Activated CD4-positive, alpha-beta T cell treated with anti-CD3 and anti-CD28 coated beads for 36 hours (primary cell): ENCODE measurements at regions of chr1 and their contacts with region 1.

Region 1: DNA sequence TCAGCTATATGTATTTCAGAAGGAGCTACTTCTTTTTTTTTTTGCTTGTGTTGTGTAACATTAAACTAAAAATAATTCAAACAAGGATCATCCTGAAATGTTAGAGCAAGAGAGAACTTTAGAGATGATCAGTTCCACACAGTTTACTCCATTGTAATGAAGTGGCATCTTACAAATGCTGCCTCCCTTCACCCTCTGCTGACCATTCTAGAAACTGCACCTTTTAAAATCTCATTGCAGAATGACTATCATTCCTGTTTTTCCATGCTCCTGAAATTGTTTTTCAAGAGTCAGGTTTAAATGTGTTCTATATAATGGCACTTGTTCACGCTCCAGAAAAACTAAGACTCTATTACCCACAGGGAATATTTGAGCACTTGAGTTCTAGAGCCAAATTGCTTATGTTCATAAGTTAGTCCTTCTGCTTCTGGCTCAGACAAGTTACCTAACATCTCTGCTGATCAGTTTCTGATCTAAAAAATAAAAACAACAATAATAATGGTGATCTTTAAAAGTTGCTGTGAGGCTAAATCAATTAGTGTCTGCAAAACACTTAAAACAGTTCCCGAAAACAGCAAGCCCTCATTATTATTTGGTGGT is 21.5 kb upstream of the SLC44A5 start:
- DNase-seq: no peak
- ATAC-seq: no peak
- H3K4me3 Mint-ChIP-seq: no peak overlapping the region
- H3K27ac Mint-ChIP-seq: no peak overlapping the region
- H3K4me1 Mint-ChIP-seq: no peaks in the 10 kb centered on the region
- H3K27me3 Mint-ChIP-seq: peaks cover 22% of the 10 kb centered on the region

Region 2: DNA sequence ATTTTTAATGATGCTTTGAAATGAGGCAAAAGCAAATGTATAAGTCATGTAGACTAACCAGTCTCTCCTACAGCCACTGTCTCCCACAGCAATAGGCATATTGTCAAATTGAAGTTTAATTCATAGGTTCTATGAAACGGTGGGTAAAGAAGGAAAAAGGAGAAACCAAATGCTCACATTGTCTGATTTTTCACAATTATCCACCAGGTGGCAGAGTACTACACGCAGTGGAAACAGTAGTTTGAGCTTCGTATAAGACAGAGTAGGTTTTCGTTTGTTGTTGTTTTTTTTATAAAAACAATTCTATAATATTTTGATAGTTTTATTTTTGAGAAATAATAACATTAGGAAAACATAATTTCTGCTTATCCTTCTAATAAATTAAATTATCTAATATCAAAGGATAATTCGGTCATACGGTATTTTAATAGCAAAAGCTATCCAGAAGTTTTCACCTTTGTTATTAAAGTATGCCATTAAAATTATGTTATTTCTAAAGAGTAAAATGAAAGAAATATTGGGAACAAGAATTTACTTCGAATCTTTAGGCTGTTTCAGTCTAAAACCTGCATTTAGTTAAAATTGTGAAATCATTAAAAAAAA is 860.4 kb before region 1 on chr1:
- CTCF ChIA-PET with region 1: no interaction called
- POLR2A ChIA-PET with region 1: no interaction called
- intact Hi-C with region 1: loop called (anchors 1 to 10 kb)
- DNase-seq: peak; percentile 27
- ATAC-seq: no peak
- H3K4me3 Mint-ChIP-seq: no peak overlapping the region
- H3K27ac Mint-ChIP-seq: no peak overlapping the region
- H3K4me1 Mint-ChIP-seq: no peaks in the 10 kb centered on the region
- H3K27me3 Mint-ChIP-seq: peaks cover 9% of the 10 kb centered on the region

Region 3: GRCh38 chr1:75233302-75233929 is 399.0 kb before region 1 on chr1:
- CTCF ChIA-PET with region 1: interaction called, 6 read pairs
- POLR2A ChIA-PET with region 1: no interaction called
- intact Hi-C with region 1: loop called (anchors 1 to 5 kb)
- DNase-seq: no peak
- ATAC-seq: peak; percentile 53
- H3K4me3 Mint-ChIP-seq: no peak overlapping the region
- H3K27ac Mint-ChIP-seq: no peak overlapping the region
- H3K4me1 Mint-ChIP-seq: no peaks in the 10 kb centered on the region
- H3K27me3 Mint-ChIP-seq: no peaks in the 10 kb centered on the region

Region 4: GRCh38 chr1:75265792-75266191 is 366.7 kb before region 1 on chr1:
- CTCF ChIA-PET with region 1: interaction called, 7 read pairs
- POLR2A ChIA-PET with region 1: no interaction called
- intact Hi-C with region 1: loop called (anchors 1 to 2 kb)
- DNase-seq: no peak
- ATAC-seq: peak; percentile 47
- H3K4me3 Mint-ChIP-seq: no peak overlapping the region
- H3K27ac Mint-ChIP-seq: no peak overlapping the region
- H3K4me1 Mint-ChIP-seq: no peaks in the 10 kb centered on the region
- H3K27me3 Mint-ChIP-seq: peaks cover 2% of the 10 kb centered on the region